ENCODE measurements at regions of chr14 and their contacts with region 1.

Region 1: DNA sequence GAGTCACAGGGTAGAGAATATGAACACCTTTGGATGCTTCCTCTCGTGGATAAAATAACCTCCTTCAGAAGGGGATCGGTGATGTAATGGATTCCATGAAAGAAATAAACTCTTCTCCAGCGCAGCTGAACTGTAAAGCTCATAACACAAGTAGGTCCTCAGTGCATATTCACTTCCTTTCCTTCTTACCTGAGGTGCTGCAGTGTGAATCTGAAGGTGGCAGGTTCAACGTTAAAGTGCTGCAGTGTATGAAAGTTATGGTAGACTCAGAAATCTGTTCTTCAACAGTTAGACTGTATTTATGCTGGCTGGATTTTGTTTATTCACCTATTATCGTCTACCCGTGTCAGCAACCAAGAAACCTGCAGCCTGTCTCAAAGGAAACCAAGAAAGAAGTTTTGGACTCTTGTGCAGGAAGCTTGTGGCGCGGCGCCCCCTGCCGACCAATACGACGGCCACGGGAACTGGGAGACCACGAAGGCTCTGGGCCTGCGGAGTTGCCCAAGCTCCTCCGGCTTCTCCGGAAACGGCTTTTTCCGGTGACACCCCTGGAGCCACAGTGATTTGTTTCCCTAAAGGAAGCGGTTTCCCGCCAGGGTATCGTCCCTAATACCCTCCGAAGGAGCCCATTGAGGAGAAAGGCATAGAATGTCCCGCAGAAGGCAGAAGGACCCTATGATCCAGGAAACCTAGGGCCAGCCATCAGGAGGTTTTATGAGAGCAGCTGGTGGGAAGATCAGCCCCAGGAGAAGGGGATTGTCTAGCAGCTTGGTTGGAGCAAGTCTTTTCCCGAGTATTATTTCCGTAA is 17.6 kb upstream of the RNASE3 start:
- DNase-seq: peak; percentile 63 to 70 (median 66)
- H3K4me3 ChIP-seq: no peak overlapping the region
- H3K4me3 Mint-ChIP-seq: peak overlapping the region in 4 of 8 donors; percentile 17 to 60 (median 20)
- H3K27ac ChIP-seq: no peak overlapping the region
- H3K27ac Mint-ChIP-seq: peak overlapping the region in 1 of 7 donors; percentile 13
- H3K4me1 ChIP-seq: peaks cover 11% of the 10 kb centered on the region
- H3K4me1 Mint-ChIP-seq: peaks cover 5 to 16% (median 8%) of the 10 kb centered on the region in 4 donors
- H3K27me3 ChIP-seq: peaks cover 4% of the 10 kb centered on the region
- H3K27me3 Mint-ChIP-seq: peaks cover 6 to 12% of the 10 kb centered on the region in 2 donors

Region 2: DNA sequence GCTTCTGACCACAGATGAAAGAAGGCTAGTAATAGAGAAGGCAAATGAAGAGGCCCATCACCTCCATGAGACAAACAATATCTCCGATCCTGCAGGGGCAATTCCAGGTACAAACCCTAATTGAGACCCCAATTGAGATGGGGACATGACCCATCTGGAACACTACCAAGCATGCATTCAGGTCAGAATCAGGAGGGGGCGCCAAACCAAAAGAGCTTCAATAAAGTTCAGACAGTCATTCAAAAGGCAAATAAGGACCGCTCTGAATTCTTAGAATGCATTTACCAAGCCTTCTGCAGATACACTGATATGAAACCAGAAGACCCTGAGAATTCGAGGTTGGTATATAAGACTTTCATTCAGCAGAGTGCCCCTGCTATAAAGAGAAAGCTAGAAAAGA is 115.6 kb before region 1 on chr14:
- CTCF ChIA-PET with region 1: interaction called, 10 read pairs
- POLR2A ChIA-PET with region 1: no interaction called
- intact Hi-C with region 1: no loop called
- DNase-seq: peak in 4 of 5 donors; percentile 16 to 34 (median 26)
- H3K4me3 ChIP-seq: no peak overlapping the region
- H3K4me3 Mint-ChIP-seq: no peak overlapping the region
- H3K27ac ChIP-seq: no peak overlapping the region
- H3K27ac Mint-ChIP-seq: no peak overlapping the region
- H3K4me1 ChIP-seq: no peaks in the 10 kb centered on the region
- H3K4me1 Mint-ChIP-seq: no peaks in the 10 kb centered on the region
- H3K27me3 ChIP-seq: no peaks in the 10 kb centered on the region
- H3K27me3 Mint-ChIP-seq: peaks cover 0 to 2% of the 10 kb centered on the region in 2 donors

Region 3: GRCh38 chr14:20922474-20922873 is 48.9 kb after region 1 on chr14:
- CTCF ChIA-PET with region 1: no interaction called
- POLR2A ChIA-PET with region 1: no interaction called
- intact Hi-C with region 1: no loop called
- DNase-seq: no peak
- H3K4me3 ChIP-seq: no peak overlapping the region
- H3K4me3 Mint-ChIP-seq: no peak overlapping the region
- H3K27ac ChIP-seq: no peak overlapping the region
- H3K27ac Mint-ChIP-seq: no peak overlapping the region
- H3K4me1 ChIP-seq: no peaks in the 10 kb centered on the region
- H3K4me1 Mint-ChIP-seq: peaks cover 0 to 1% (median 0%) of the 10 kb centered on the region in 4 donors
- H3K27me3 ChIP-seq: peaks cover 4% of the 10 kb centered on the region
- H3K27me3 Mint-ChIP-seq: peaks cover 19 to 46% of the 10 kb centered on the region in 2 donors

Measured in CD4-positive, alpha-beta memory T cell (primary cell).